ENCODE measurements at regions of chr10 and their contacts with region 1.

Region 1: DNA sequence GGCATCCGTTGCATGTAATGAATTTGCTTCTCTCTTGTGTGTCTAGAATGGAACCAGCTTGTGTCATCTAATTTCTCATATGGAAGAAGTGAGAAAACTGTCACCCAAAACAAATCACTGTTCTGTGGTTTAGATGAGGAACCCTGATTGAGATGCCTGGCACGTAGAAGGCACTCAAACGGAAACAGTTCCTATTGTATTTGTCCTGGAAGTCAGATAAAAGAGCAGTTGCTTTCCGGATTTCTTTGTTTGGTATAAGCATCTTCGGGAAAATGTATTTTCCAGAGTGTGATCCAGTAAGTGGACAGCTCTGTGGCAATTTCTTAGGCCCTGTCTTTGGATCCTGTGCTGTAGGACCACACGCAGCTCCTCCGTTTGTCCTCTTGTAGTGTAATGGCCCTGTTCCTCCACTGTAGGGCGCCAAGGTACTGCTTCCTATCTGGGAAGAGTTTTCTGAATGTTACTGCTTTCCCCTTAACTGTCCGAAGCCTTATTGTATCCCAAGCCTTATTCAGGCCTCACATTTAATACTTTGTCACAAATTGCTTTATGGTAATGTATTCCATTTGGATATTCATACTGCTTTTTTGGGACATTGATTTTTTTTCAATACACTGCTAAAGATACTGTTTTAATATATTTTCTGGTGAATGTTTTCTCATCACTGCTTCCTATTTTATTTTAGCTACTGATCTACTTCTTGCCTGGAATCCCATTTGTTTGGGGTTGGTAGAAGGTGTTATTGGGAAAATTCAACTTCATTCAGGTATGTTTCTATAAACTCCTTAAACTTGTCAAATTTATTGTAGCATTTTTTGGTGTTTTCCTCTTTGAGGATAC is 24.8 kb downstream of the INPP5F start:
- DNase-seq: peak; percentile 74
- H3K4me3 ChIP-seq: no peak overlapping the region
- H3K27ac ChIP-seq: no peak overlapping the region
- H3K4me1 ChIP-seq: no peaks in the 10 kb centered on the region
- CTCF ChIP-seq: peak; percentile 96

Region 2: DNA sequence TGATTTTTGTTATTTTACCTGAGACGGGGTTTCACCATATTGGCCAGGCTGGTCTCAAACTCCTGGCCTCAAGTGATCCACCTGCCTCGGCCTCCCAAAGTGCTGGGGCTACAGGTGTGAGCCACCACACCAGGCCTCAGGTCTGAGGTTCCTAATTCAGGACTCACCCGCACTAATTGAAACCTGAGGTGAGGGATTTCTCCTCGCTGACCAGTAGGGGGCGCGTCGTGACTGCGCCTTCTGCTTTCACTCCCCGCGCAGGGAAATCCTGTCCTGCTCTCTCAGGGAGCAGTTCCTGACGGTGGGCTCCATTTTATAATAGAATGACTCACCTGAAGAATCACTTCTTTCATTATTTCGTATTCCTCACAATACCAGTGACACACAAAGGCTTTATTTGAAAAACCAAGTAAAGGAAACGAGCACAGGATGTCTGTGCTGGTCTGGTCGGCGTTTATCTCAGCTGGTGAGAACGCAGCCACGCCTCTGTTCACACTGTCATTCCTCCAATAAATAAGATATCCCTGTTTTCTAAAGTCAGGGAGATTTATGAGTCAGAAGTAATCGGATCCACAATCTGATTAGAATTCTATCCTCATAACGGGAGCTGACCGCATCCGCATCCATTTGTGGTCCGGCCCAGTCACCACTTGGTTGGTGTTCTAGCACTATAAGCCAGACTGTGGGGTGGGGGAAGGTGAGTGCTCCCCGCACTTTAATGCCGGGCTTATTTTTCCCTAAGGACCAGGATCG is 64.0 kb before region 1 on chr10:
- CTCF ChIA-PET with region 1: interaction called, 4 read pairs
- POLR2A ChIA-PET with region 1: interaction called, 3 read pairs
- intact Hi-C with region 1: loop called (anchors 1 kb)
- DNase-seq: peak; percentile 80
- H3K4me3 ChIP-seq: no peak overlapping the region
- H3K27ac ChIP-seq: no peak overlapping the region
- H3K4me1 ChIP-seq: no peaks in the 10 kb centered on the region
- CTCF ChIP-seq: peak; percentile 95

Region 3: DNA sequence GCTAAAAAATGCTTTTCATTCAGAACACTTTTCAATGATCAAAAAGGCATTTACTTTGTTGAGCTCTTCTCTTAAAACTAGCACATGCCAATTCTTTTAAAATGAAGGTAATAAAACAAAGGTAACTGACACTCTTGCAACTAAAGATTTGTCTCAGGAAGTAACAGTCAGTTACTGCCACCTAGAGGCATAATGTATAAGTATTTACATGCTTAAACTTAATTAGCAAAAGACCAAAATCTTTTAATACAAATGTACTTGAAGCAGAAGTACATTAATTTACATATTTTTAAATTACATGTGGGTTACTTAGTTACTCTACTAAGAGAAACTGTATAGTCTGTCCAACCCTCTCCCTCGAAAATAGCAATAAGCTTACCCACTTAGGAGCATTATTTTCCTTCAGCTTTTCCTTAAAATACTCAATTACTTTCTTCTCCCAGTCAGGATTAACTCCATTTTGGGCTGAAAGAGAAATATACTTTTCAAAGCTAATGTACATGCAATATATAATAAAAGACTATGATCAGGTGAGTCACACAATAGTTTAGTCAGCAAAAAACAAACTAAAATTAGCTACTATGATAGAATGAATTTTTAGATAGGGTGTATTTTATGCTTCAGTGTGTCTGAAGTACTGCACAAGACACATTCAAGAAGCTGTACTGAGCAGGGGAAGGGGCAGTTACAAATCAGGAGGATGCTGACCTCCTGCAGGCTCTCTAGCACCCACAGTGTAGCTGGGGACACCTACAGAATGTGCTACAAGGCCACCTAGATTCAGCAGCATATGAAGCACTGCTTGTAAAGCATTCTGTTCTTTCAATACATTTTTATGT is 109.0 kb after region 1 on chr10:
- CTCF ChIA-PET with region 1: no interaction called
- POLR2A ChIA-PET with region 1: interaction called, 4 read pairs
- intact Hi-C with region 1: loop called (anchors 1 kb)
- DNase-seq: peak; percentile 63
- H3K4me3 ChIP-seq: no peak overlapping the region
- H3K27ac ChIP-seq: no peak overlapping the region
- H3K4me1 ChIP-seq: peaks cover 35% of the 10 kb centered on the region
- CTCF ChIP-seq: peak; percentile 95

Region 4: GRCh38 chr10:119919826-119920225 is 169.2 kb after region 1 on chr10:
- CTCF ChIA-PET with region 1: no interaction called
- POLR2A ChIA-PET with region 1: no interaction called
- intact Hi-C with region 1: loop called (anchors 10 kb)
- DNase-seq: no peak
- H3K4me3 ChIP-seq: no peak overlapping the region
- H3K27ac ChIP-seq: no peak overlapping the region
- H3K4me1 ChIP-seq: peaks cover 5% of the 10 kb centered on the region
- CTCF ChIP-seq: no peak

Region 5: GRCh38 chr10:120131183-120131582 is 380.6 kb after region 1 on chr10:
- CTCF ChIA-PET with region 1: no interaction called
- POLR2A ChIA-PET with region 1: no interaction called
- intact Hi-C with region 1: no loop called
- DNase-seq: peak; percentile 3
- H3K4me3 ChIP-seq: no peak overlapping the region
- H3K27ac ChIP-seq: no peak overlapping the region
- H3K4me1 ChIP-seq: no peaks in the 10 kb centered on the region
- CTCF ChIP-seq: no peak

Region 6: DNA sequence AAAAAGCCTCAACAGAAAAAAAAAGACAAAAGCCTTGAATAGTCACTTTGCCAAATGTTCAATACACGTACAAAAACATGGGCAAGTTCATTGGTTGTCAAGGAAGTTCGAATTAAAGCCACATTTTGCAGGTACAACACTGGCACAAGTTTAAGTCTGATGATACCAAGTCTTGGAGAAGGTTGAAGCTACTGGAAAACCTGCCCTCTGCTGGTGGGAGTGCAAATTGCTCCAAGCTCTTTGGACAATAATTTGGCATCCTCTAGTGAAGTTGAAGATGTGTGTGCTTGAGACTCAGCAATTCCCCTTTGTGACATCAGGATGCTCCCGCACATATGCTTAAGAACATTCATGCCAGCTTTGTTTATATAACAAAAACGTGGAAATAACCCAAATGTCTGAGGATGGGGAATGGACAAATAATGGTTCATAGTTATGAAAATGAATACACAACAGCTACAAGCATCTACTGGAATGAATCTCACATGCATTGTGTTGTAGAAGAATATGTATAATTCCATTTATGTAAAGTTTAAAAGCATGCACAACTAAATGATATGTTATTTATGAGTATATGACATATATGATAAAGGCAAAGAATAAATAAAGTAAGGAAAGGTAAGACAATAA is 586.4 kb after region 1 on chr10:
- CTCF ChIA-PET with region 1: interaction called, 3 read pairs
- POLR2A ChIA-PET with region 1: no interaction called
- intact Hi-C with region 1: loop called (anchors 5 kb)
- DNase-seq: peak; percentile 49
- H3K4me3 ChIP-seq: no peak overlapping the region
- H3K27ac ChIP-seq: no peak overlapping the region
- H3K4me1 ChIP-seq: no peaks in the 10 kb centered on the region
- CTCF ChIP-seq: peak; percentile 93